ENCODE measurements at regions of chr3 and their contacts with region 1.

Region 1: GRCh38 chr3:39126532-39127071 is 19.1 kb downstream of the TTC21A start:
- DNase-seq: no peak
- H3K4me3 ChIP-seq: no peak overlapping the region
- H3K27ac ChIP-seq: no peak overlapping the region
- H3K4me1 ChIP-seq: 0 out of 7 replicates have a peak, but pooled peaks cover 0 to 3% (median 0%) of the 10 kb centered on the region in 4 experiments
- H3K27me3 ChIP-seq: no peaks in the 10 kb centered on the region
- CTCF ChIP-seq: peak; percentile 69 to 72 (median 70)
- EP300 ChIP-seq: no peak
- POLR2A ChIP-seq: no peak
- RAD21 ChIP-seq: peak; percentile 84 to 87

Region 2: GRCh38 chr3:39107388-39108199 is 19.0 kb before region 1 on chr3 and contains the starts of genes GORASP1 and TTC21A:
- CTCF ChIA-PET with region 1: interaction called, 95 read pairs
- POLR2A ChIA-PET with region 1: interaction called, 3 read pairs
- DNase-seq: peak in 1 of 2 experiments; percentile 86
- H3K4me3 ChIP-seq: peak within 1 kb of the TSS; percentile 77 to 92 (median 84)
- H3K27ac ChIP-seq: no peak within 1 kb of the TSS
- H3K4me1 ChIP-seq: no peaks in the 10 kb centered on the region; a peak in 2 of 7 replicates
- H3K27me3 ChIP-seq: peaks cover 0 to 8% (median 3%) of the 10 kb centered on the region in 4 experiments; a peak in 2 of 7 replicates
- CTCF ChIP-seq: no peak
- EP300 ChIP-seq: no peak
- POLR2A ChIP-seq: no peak
- RAD21 ChIP-seq: peak in 1 of 2 experiments; percentile 2; a peak in 1 of 4 replicates
- total RNA-seq, gene GORASP1: 33.4 and 39.3 TPM in 2 replicates
- total RNA-seq, gene TTC21A: 1.7 and 2.8 TPM in 2 replicates

Region 3: GRCh38 chr3:39166134-39166731 is 39.6 kb after region 1 on chr3:
- CTCF ChIA-PET with region 1: interaction called, 42 read pairs
- POLR2A ChIA-PET with region 1: no interaction called
- DNase-seq: no peak
- H3K4me3 ChIP-seq: no peak overlapping the region
- H3K27ac ChIP-seq: no peak overlapping the region
- H3K4me1 ChIP-seq: peaks cover 0 to 11% (median 4%) of the 10 kb centered on the region in 4 experiments; a peak in 4 of 7 replicates
- H3K27me3 ChIP-seq: no peaks in the 10 kb centered on the region
- CTCF ChIP-seq: no peak
- EP300 ChIP-seq: no peak
- POLR2A ChIP-seq: no peak
- RAD21 ChIP-seq: peak in 1 of 2 experiments; percentile 17; a peak in 1 of 4 replicates

Region 4: DNA sequence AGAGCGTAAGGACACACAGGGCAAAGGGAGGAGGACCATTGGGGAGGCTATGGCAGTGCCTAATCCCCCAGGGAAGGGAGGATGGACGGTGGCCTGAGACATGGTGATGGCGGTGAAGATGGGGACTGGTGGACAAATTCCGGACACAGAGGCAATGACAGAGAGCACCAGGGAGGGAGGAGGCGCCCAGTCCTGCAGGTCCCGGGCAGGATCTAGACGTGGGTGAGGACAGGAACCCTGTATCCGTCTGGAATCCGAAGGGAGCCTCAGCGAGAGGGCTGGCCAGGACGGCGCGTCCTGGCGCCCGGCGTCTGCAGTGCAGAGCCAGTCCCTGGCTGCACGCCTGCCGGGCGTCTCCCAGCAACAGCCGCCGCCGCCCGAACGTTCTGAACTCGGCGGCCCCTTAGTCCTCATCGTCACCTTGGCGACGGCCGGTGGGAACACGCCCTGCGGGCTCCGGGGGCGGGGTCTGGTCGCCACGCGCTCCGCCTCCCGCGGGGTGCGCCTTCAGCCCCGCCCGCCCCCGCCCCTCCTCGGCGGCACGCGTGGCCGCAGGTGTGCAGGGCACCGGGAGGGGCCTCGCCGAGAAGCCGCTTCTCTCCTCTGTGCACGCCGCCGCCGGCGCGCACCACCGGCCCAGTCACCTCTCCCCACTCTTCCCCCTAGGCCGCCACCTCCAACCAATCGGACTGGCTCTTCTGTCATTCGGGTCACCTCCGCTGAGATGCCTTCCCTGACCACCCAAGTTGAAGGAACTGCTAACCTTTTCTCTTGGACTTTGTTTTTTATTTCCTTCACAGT is 54.1 kb after region 1 on chr3:
- CTCF ChIA-PET with region 1: interaction called, 366 read pairs
- POLR2A ChIA-PET with region 1: interaction called, 5 read pairs
- DNase-seq: peak; percentile 62 to 94
- H3K4me3 ChIP-seq: peak overlapping the region; percentile 26 to 61 (median 52)
- H3K27ac ChIP-seq: no peak overlapping the region
- H3K4me1 ChIP-seq: peaks cover 4 to 20% (median 13%) of the 10 kb centered on the region in 4 experiments
- H3K27me3 ChIP-seq: peaks cover 0 to 12% (median 10%) of the 10 kb centered on the region in 4 experiments; a peak in 6 of 7 replicates
- CTCF ChIP-seq: no peak
- EP300 ChIP-seq: no peak
- POLR2A ChIP-seq: no peak
- RAD21 ChIP-seq: no peak; a peak in 1 of 4 replicates

Region 5: GRCh38 chr3:39202094-39202493 is 75.5 kb after region 1 on chr3:
- CTCF ChIA-PET with region 1: interaction called, 366 read pairs
- POLR2A ChIA-PET with region 1: interaction called, 3 read pairs
- DNase-seq: no peak
- H3K4me3 ChIP-seq: no peak overlapping the region
- H3K27ac ChIP-seq: no peak overlapping the region
- H3K4me1 ChIP-seq: no peaks in the 10 kb centered on the region
- H3K27me3 ChIP-seq: no peaks in the 10 kb centered on the region
- CTCF ChIP-seq: no peak
- EP300 ChIP-seq: no peak
- POLR2A ChIP-seq: no peak
- RAD21 ChIP-seq: no peak

Region 6: GRCh38 chr3:39260957-39261356 is 134.4 kb after region 1 on chr3:
- CTCF ChIA-PET with region 1: interaction called, 30 read pairs
- POLR2A ChIA-PET with region 1: interaction called, 3 read pairs
- DNase-seq: no peak
- H3K4me3 ChIP-seq: no peak overlapping the region
- H3K27ac ChIP-seq: no peak overlapping the region
- H3K4me1 ChIP-seq: no peaks in the 10 kb centered on the region
- H3K27me3 ChIP-seq: no peaks in the 10 kb centered on the region
- CTCF ChIP-seq: peak in 2 of 3 experiments; percentile 28 to 34; a peak in 2 of 4 replicates
- EP300 ChIP-seq: no peak
- POLR2A ChIP-seq: no peak
- RAD21 ChIP-seq: peak; percentile 26 to 29; a peak in 2 of 4 replicates

Region 7: DNA sequence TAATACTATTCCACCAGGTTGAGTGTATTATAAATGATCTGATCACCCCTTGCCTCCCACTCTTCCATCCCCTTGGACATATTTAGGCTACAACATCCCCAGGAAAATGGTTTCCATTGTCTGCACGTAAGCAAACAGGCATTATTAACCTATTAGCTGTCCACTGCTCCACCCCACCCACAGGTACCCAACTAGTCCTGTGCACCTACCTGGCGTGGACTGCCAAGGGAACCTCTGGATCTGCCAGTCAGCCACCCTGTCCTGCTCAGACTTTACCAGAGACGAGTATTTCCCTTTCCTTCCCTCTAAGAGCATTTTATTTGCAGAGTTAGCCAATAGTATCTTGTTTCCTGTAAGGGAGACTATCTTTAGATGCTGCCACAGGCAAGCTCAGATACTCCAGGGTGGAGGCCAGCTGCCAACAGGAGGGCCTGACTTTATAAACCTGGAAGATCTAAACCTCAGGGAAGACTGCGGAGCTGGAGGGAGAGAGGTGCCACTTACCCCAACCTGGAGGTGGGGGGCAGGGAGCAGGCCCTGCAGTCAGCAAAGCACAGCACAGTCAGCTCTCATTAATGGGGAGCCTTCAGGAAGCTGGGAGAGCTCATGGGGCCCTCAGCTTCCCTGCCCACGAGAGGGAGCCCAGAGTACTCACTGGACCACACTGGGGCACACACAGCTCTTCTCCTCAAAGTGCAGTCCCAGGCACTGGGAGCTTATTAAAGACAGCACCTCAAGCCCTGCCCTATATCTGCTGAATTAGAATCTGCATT is 153.3 kb after region 1 on chr3 and contains the start of gene CX3CR1:
- CTCF ChIA-PET with region 1: interaction called, 496 read pairs
- POLR2A ChIA-PET with region 1: no interaction called
- DNase-seq: no peak
- H3K4me3 ChIP-seq: no peak within 1 kb of the TSS
- H3K27ac ChIP-seq: no peak within 1 kb of the TSS
- H3K4me1 ChIP-seq: peaks cover 0 to 3% (median 0%) of the 10 kb centered on the region in 4 experiments; a peak in 1 of 7 replicates
- H3K27me3 ChIP-seq: no peaks in the 10 kb centered on the region
- CTCF ChIP-seq: no peak
- EP300 ChIP-seq: no peak
- POLR2A ChIP-seq: no peak
- RAD21 ChIP-seq: no peak
- total RNA-seq, gene CX3CR1: not detected in 2 replicates